GM23248 (cell line): ENCODE measurements at regions of chr5 and their contacts with region 1.

Region 1: GRCh38 chr5:112146323-112147226 is 272.5 kb downstream of the EPB41L4A start:
- DNase-seq: peak; percentile 95
- H3K4me3 ChIP-seq: peak overlapping the region; percentile 42
- H3K27ac ChIP-seq: peak overlapping the region; percentile 83
- H3K4me1 ChIP-seq: peaks cover 26% of the 10 kb centered on the region
- H3K27me3 ChIP-seq: no peaks in the 10 kb centered on the region

Region 2: GRCh38 chr5:111548992-111549649 is 597.5 kb before region 1 on chr5:
- in situ Hi-C with region 1: loop called (anchors 5 kb)
- DNase-seq: peak; percentile 60
- H3K4me3 ChIP-seq: no peak overlapping the region
- H3K27ac ChIP-seq: no peak overlapping the region
- H3K4me1 ChIP-seq: peaks cover 30% of the 10 kb centered on the region
- H3K27me3 ChIP-seq: no peaks in the 10 kb centered on the region

Region 3: GRCh38 chr5:111697881-111698757 is 448.5 kb before region 1 on chr5:
- in situ Hi-C with region 1: no loop called
- DNase-seq: peak; percentile 74
- H3K4me3 ChIP-seq: no peak overlapping the region
- H3K27ac ChIP-seq: peak overlapping the region; percentile 15; the same call in 1 of the 2 replicates
- H3K4me1 ChIP-seq: peaks cover 46% of the 10 kb centered on the region
- H3K27me3 ChIP-seq: no peaks in the 10 kb centered on the region

Region 4: DNA sequence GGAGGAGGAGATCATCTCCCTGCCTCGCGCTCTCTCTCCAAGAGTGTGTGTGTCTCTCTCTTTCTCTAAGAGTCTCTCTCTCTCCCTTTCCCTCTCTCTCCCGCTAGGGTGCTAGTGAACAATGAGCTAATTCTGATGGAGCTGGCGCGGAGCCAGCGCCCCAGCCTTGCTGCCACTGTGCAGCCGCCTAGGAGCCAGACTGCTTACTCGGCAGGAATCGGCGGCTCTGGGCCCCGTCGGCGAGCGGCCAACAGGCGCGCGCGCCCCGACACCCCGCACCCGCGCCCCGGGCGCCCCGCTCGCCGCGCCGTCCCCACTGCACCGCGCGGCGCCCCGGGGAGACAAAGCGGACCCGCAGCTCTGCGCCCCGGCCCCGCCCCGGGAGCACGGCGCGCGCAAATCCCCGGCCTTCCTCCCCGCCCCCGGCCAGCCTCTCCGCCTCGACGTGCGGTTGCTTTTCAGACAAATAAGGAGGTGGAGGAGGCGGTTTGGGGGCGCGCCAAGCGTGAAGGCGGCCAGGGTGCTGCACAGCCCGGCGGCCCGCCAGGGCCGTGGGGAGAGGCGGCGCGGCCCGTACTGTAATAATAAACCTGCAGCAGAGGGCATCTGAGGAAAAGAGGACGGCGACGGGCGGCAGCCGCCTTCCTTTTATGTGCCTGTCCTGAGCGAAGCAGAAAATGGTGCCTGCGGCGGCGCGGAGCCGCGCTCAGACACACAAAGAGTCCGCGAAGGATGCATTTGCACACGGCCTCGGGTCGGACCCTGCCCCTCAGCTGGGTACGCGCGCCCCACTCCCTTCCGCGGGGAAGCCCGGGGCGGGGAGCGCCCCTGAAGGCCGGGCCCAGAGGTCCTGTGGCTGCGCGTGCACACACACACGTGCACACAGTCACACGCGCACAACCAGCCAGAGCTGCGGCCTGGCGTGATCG is 389.0 kb before region 1 on chr5:
- in situ Hi-C with region 1: loop called (anchors 5 kb)
- DNase-seq: peak; percentile 99
- H3K4me3 ChIP-seq: peak overlapping the region; percentile 98
- H3K27ac ChIP-seq: peak overlapping the region; percentile 93
- H3K4me1 ChIP-seq: peaks cover 13% of the 10 kb centered on the region
- H3K27me3 ChIP-seq: no peaks in the 10 kb centered on the region